ENCODE measurements at regions of chr6 and their contacts with region 1.

Region 1: DNA sequence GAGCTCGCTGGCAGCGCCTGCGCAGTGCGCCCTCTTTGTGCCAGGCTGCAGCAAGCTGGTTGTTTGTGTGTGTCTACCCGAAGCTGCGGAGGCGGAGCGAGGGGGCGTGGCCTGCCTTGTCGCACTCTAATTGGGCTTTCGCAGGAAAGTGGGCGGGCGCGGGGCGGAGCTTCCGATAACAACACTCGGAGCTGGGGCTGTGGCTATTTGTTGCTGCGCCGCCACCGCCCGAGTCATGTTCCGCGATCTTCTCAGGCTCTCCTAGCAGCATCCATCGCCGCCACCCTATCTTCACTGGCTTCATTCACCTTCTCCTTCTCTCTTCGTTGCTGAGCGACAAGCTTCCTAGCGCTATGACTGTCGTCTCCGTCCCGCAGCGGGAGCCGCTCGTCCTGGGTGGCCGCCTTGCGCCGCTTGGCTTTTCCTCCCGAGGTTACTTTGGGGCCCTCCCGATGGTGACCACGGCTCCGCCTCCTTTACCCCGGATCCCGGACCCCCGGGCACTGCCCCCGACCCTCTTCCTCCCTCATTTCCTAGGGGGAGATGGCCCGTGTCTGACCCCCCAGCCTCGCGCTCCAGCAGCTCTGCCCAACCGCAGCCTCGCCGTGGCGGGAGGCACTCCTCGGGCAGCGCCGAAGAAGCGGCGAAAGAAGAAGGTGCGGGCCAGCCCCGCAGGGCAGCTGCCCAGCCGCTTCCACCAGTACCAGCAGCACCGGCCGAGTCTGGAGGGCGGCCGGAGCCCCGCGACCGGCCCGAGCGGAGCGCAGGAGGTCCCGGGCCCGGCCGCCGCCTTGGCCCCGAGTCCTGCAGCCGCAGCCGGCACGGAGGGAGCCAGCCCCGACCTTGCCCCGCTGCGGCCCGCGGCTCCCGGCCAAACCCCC is at the start of gene PNRC1:
- DNase-seq: peak; percentile 100
- ATAC-seq: peak; percentile 77
- H3K4me3 ChIP-seq: peak within 1 kb of the TSS; percentile 83 to 99
- H3K4me3 Mint-ChIP-seq: peak within 1 kb of the TSS; percentile 96
- H3K27ac ChIP-seq: peak within 1 kb of the TSS; percentile 94 to 100
- H3K27ac Mint-ChIP-seq: peak within 1 kb of the TSS; percentile 98
- H3K4me1 ChIP-seq: peaks cover 37% of the 10 kb centered on the region
- H3K4me1 Mint-ChIP-seq: peaks cover 38% of the 10 kb centered on the region
- H3K27me3 ChIP-seq: no peaks in the 10 kb centered on the region
- H3K27me3 Mint-ChIP-seq: no peaks in the 10 kb centered on the region
- CTCF ChIP-seq: no peak
- total RNA-seq, gene PNRC1: 1,160 to 1,236 TPM

Region 2: DNA sequence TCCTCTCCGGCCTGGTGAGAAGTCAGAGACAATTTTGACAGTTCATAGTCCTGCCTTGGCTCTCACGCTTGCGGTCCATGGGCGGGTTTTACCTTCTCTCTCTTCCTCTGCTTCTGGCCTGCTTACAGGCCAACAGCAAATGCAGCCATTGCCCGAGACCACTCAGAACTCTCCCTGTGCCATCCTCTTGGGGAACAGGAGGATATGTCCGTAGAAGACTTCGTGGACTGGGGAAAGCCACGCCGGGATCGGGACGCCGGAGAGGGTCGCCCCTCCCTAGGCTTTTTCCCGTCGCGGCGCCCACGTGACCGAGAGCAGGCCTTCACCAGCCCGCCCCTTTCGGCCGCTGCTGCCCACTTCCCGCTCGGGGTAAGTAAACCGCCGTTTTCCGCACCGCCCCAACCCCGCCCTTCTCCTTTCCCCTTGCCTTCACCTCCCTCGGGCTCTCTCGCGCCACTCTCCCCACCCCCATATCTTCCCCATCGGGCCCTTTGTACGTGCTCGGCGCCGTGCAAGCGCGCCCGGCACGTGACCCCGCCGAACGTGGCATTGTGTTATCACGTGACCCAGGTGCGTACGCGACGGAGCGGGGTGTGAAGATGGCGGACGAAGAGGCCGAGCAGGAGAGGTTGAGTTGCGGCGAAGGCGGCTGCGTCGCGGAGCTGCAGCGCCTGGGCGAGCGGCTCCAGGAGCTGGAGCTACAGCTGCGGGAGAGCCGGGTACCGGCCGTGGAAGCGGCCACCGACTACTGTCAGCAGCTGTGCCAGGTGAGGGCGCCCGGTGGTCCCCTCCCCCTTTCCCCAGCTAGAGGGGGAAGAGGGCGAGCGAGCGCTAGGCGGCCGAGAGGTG is 1925.6 kb before region 1 on chr6 and contains the start of gene ZNF292:
- CTCF ChIA-PET with region 1: no interaction called
- POLR2A ChIA-PET with region 1: interaction called, 3 read pairs
- intact Hi-C with region 1: loop called (anchors 2 to 10 kb)
- DNase-seq: peak; percentile 85 to 98 (median 95)
- ATAC-seq: peak; percentile 67
- H3K4me3 ChIP-seq: peak within 1 kb of the TSS; percentile 73 to 80
- H3K4me3 Mint-ChIP-seq: peak within 1 kb of the TSS; percentile 96
- H3K27ac ChIP-seq: peak within 1 kb of the TSS; percentile 85 to 95
- H3K27ac Mint-ChIP-seq: peak within 1 kb of the TSS; percentile 98
- H3K4me1 ChIP-seq: peaks cover 54% of the 10 kb centered on the region
- H3K4me1 Mint-ChIP-seq: peaks cover 58% of the 10 kb centered on the region
- H3K27me3 ChIP-seq: no peaks in the 10 kb centered on the region
- H3K27me3 Mint-ChIP-seq: no peaks in the 10 kb centered on the region
- CTCF ChIP-seq: no peak
- total RNA-seq, gene ZNF292: 82.6 to 87.6 TPM

Region 3: GRCh38 chr6:87472525-87473418 is 1608.0 kb before region 1 on chr6 and contains the start of gene SLC35A1:
- CTCF ChIA-PET with region 1: no interaction called
- POLR2A ChIA-PET with region 1: no interaction called
- intact Hi-C with region 1: loop called in 1 of 2 experiments (anchors 2 kb)
- DNase-seq: peak; percentile 73 to 93 (median 86)
- ATAC-seq: peak; percentile 91
- H3K4me3 ChIP-seq: peak within 1 kb of the TSS; percentile 93 to 96
- H3K4me3 Mint-ChIP-seq: peak within 1 kb of the TSS; percentile 99
- H3K27ac ChIP-seq: peak within 1 kb of the TSS; percentile 97 to 98
- H3K27ac Mint-ChIP-seq: peak within 1 kb of the TSS; percentile 100
- H3K4me1 ChIP-seq: peaks cover 15% of the 10 kb centered on the region
- H3K4me1 Mint-ChIP-seq: peaks cover 18% of the 10 kb centered on the region
- H3K27me3 ChIP-seq: no peaks in the 10 kb centered on the region
- H3K27me3 Mint-ChIP-seq: peaks cover 3% of the 10 kb centered on the region
- CTCF ChIP-seq: peak; percentile 20
- total RNA-seq, gene SLC35A1: 4.3 to 4.9 TPM

Region 4: DNA sequence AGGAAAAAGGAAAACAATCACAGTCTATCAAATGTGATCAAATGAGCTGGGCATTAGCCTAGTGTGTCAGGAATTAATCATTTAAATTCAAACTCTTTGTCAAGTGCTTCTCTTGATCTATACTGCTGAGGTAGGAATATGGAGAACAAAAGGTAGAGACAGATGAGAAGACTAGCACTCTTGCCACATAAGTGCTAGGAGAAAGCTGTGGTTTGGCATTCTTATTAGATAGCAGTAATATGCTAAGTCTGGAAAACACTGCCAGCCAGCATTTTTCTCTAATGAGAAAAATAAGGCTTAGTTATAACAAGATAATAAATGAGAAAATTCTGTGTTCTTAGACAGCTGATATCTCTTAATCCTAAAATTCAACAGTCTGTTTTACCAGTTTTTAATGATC is 1451.9 kb before region 1 on chr6:
- CTCF ChIA-PET with region 1: no interaction called
- POLR2A ChIA-PET with region 1: no interaction called
- intact Hi-C with region 1: no loop called
- DNase-seq: no peak
- ATAC-seq: no peak
- H3K4me3 ChIP-seq: no peak overlapping the region
- H3K4me3 Mint-ChIP-seq: no peak overlapping the region
- H3K27ac ChIP-seq: no peak overlapping the region
- H3K27ac Mint-ChIP-seq: no peak overlapping the region
- H3K4me1 ChIP-seq: no peaks in the 10 kb centered on the region
- H3K4me1 Mint-ChIP-seq: no peaks in the 10 kb centered on the region
- H3K27me3 ChIP-seq: no peaks in the 10 kb centered on the region
- H3K27me3 Mint-ChIP-seq: no peaks in the 10 kb centered on the region
- CTCF ChIP-seq: no peak

Region 5: GRCh38 chr6:88683734-88684133 is 397.0 kb before region 1 on chr6:
- CTCF ChIA-PET with region 1: no interaction called
- POLR2A ChIA-PET with region 1: no interaction called
- intact Hi-C with region 1: no loop called
- DNase-seq: no peak
- ATAC-seq: no peak
- H3K4me3 ChIP-seq: no peak overlapping the region
- H3K4me3 Mint-ChIP-seq: no peak overlapping the region
- H3K27ac ChIP-seq: no peak overlapping the region
- H3K27ac Mint-ChIP-seq: no peak overlapping the region
- H3K4me1 ChIP-seq: no peaks in the 10 kb centered on the region
- H3K4me1 Mint-ChIP-seq: peaks cover 2% of the 10 kb centered on the region
- H3K27me3 ChIP-seq: no peaks in the 10 kb centered on the region
- H3K27me3 Mint-ChIP-seq: no peaks in the 10 kb centered on the region
- CTCF ChIP-seq: no peak

Region 6: GRCh38 chr6:88982720-88983119 is 98.1 kb before region 1 on chr6:
- CTCF ChIA-PET with region 1: interaction called, 22 read pairs
- POLR2A ChIA-PET with region 1: interaction called, 20 read pairs
- intact Hi-C with region 1: loop called (anchors 2 to 5 kb)
- DNase-seq: peak in 3 of 9 experiments; percentile 22 to 78 (median 70)
- ATAC-seq: peak; percentile 86
- H3K4me3 ChIP-seq: no peak overlapping the region
- H3K4me3 Mint-ChIP-seq: no peak overlapping the region
- H3K27ac ChIP-seq: no peak overlapping the region
- H3K27ac Mint-ChIP-seq: no peak overlapping the region
- H3K4me1 ChIP-seq: no peaks in the 10 kb centered on the region
- H3K4me1 Mint-ChIP-seq: no peaks in the 10 kb centered on the region
- H3K27me3 ChIP-seq: no peaks in the 10 kb centered on the region
- H3K27me3 Mint-ChIP-seq: peaks cover 2% of the 10 kb centered on the region
- CTCF ChIP-seq: peak; percentile 84

Region 7: GRCh38 chr6:89145787-89146646 is 65.2 kb after region 1 on chr6 and contains the start of gene PM20D2:
- CTCF ChIA-PET with region 1: interaction called, 3 read pairs
- POLR2A ChIA-PET with region 1: interaction called, 96 read pairs
- intact Hi-C with region 1: loop called (anchors 1 to 2 kb)
- DNase-seq: peak; percentile 35 to 80 (median 64)
- ATAC-seq: peak; percentile 77
- H3K4me3 ChIP-seq: peak within 1 kb of the TSS; percentile 66 to 87
- H3K4me3 Mint-ChIP-seq: peak within 1 kb of the TSS; percentile 96
- H3K27ac ChIP-seq: peak within 1 kb of the TSS; percentile 73 to 85
- H3K27ac Mint-ChIP-seq: peak within 1 kb of the TSS; percentile 97
- H3K4me1 ChIP-seq: peaks cover 19% of the 10 kb centered on the region
- H3K4me1 Mint-ChIP-seq: peaks cover 34% of the 10 kb centered on the region
- H3K27me3 ChIP-seq: no peaks in the 10 kb centered on the region
- H3K27me3 Mint-ChIP-seq: no peaks in the 10 kb centered on the region
- CTCF ChIP-seq: no peak
- total RNA-seq, gene PM20D2: 5.5 to 6.2 TPM

Region 8: GRCh38 chr6:89360415-89360999 is 279.7 kb after region 1 on chr6:
- CTCF ChIA-PET with region 1: interaction called, 4 read pairs
- POLR2A ChIA-PET with region 1: interaction called, 16 read pairs
- intact Hi-C with region 1: no loop called
- DNase-seq: peak in 1 of 9 experiments; percentile 57
- ATAC-seq: peak; percentile 74
- H3K4me3 ChIP-seq: no peak overlapping the region
- H3K4me3 Mint-ChIP-seq: no peak overlapping the region
- H3K27ac ChIP-seq: no peak overlapping the region
- H3K27ac Mint-ChIP-seq: peak overlapping the region; percentile 62
- H3K4me1 ChIP-seq: peaks cover 28% of the 10 kb centered on the region
- H3K4me1 Mint-ChIP-seq: peaks cover 54% of the 10 kb centered on the region
- H3K27me3 ChIP-seq: no peaks in the 10 kb centered on the region
- H3K27me3 Mint-ChIP-seq: no peaks in the 10 kb centered on the region
- CTCF ChIP-seq: no peak

Region 9: DNA sequence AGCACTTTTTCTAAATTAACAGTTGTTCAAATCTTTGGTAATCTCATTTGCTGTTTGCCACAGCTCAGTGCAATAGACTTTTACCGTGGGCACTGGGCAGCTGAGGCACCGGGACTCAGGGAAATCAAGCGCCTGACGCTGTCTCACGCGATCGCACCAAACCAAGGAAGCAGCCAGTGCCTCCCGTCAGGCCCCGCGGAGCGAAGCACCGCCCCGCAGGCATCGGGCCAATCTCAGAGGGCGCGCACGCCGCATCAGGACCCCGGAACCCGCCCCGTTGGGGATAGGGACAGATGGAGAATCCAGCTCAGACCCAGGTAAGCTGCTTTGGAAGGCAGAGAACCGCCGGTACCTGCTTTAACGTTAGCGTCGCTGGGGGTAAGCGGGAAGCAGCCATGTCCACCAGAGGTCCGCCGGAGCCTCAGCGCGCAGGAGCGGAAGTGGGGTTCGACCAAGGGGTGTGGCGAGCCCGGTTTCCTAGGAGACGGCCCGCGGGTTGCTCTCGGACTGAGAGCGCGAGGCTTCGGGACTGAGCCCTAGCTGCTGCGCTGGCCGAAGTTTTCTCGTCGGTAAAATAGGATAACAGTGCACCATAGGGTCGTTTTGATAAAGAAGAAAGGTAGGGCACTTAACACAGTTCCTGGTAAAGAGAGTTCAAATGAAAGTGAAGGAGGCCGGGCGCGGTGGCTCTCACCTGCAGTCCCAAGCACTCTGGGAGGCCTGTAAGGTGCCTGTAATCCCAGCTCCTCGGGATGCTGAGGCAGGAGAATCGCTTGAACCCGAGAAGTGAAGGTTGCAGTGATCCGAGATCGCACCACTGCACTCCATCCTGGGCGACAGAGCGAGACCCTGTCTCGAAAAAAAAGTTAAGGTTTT is 557.8 kb after region 1 on chr6 and contains the start of gene LYRM2:
- CTCF ChIA-PET with region 1: no interaction called
- POLR2A ChIA-PET with region 1: interaction called, 8 read pairs
- intact Hi-C with region 1: loop called (anchors 1 kb)
- DNase-seq: peak; percentile 83 to 95 (median 89)
- ATAC-seq: peak; percentile 95
- H3K4me3 ChIP-seq: peak within 1 kb of the TSS; percentile 84 to 90
- H3K4me3 Mint-ChIP-seq: peak within 1 kb of the TSS; percentile 99
- H3K27ac ChIP-seq: peak within 1 kb of the TSS; percentile 91 to 98
- H3K27ac Mint-ChIP-seq: peak within 1 kb of the TSS; percentile 99
- H3K4me1 ChIP-seq: peaks cover 15% of the 10 kb centered on the region
- H3K4me1 Mint-ChIP-seq: peaks cover 34% of the 10 kb centered on the region
- H3K27me3 ChIP-seq: no peaks in the 10 kb centered on the region
- H3K27me3 Mint-ChIP-seq: no peaks in the 10 kb centered on the region
- CTCF ChIP-seq: no peak
- total RNA-seq, gene LYRM2: 16.7 to 17.8 TPM